Natural killer cell (primary cell): ENCODE measurements at regions of chr2 and their contacts with region 1.

Region 1: GRCh38 chr2:9703085-9703641 is 72.4 kb upstream of the YWHAQ start:
- DNase-seq: peak; percentile 88 to 96
- ATAC-seq: peak; percentile 84 to 92 (median 90)
- H3K4me3 ChIP-seq: no peak overlapping the region
- H3K4me3 Mint-ChIP-seq: peak overlapping the region; percentile 77
- H3K27ac ChIP-seq: peak overlapping the region; percentile 96
- H3K27ac Mint-ChIP-seq: peak overlapping the region; percentile 95 to 97
- H3K4me1 ChIP-seq: peaks cover 47% of the 10 kb centered on the region
- H3K4me1 Mint-ChIP-seq: peaks cover 64 to 80% of the 10 kb centered on the region in 2 donors
- H3K27me3 ChIP-seq: no peaks in the 10 kb centered on the region
- H3K27me3 Mint-ChIP-seq: no peaks in the 10 kb centered on the region
- CTCF ChIP-seq: no peak

Region 2: DNA sequence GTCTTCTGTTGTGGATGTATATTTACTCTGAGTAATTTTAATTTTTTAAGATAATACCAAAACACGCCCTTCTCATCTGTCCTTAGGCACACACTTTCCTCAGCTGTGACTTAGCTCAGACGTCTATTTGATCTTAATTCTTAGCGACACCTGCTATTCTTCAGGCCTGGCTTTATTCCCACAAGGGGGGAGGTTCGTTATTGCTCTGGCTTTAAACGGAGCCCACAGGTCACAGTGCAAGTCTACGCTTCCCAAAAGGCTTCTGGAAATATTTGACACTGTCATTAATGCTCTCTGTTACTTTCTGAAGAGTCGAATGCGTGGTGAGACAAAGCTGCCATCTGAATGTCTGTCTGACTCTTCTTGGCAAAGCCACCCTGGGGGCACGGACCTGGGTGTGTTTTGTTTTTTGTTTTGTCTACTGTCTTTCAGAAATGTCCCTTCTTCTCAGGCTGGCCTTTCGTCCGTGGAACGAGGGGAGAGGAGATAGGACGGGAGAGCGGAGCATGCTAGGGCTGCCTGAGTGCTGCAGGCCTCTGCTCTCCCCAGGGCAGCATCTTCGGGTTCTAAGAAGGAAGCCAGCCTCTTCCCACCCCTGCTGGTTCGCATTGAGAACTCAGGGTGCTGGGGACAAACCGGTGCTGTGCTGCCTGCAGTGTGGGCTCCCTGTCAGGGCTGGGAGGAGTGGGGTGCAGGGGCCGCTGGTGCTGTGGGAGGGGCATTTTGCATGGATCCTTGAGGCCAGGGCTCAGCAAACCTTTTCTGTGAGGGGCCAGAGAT is 434.7 kb before region 1 on chr2:
- intact Hi-C with region 1: no loop called
- DNase-seq: no peak
- ATAC-seq: no peak
- H3K4me3 ChIP-seq: no peak overlapping the region
- H3K4me3 Mint-ChIP-seq: no peak overlapping the region
- H3K27ac ChIP-seq: no peak overlapping the region
- H3K27ac Mint-ChIP-seq: no peak overlapping the region
- H3K4me1 ChIP-seq: no peaks in the 10 kb centered on the region
- H3K4me1 Mint-ChIP-seq: peaks cover 5% of the 10 kb centered on the region in 2 donors
- H3K27me3 ChIP-seq: no peaks in the 10 kb centered on the region
- H3K27me3 Mint-ChIP-seq: peaks cover 8 to 17% of the 10 kb centered on the region in 2 donors
- CTCF ChIP-seq: no peak

Region 3: DNA sequence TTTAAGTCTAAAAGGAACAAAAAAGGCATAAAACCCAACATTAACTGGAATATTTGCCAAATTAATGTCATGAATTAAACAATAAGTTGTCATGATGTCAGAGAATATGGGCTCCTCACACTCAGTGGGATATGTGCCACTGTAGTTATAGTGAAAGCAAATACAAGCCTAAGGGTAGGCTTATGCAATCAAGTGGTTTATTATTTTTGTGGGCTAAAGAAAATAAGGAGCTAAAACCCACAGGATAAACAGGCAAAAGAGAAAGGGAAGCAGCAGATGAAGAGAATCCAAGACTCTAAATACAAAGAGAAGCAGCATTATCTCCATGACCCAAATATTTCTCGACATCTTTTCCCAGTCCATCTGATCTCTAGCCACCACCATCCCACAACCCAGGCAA is 89.9 kb before region 1 on chr2:
- intact Hi-C with region 1: loop called (anchors 1 kb)
- DNase-seq: no peak
- ATAC-seq: peak in 2 of 3 donors; percentile 44 to 52
- H3K4me3 ChIP-seq: no peak overlapping the region
- H3K4me3 Mint-ChIP-seq: no peak overlapping the region
- H3K27ac ChIP-seq: no peak overlapping the region
- H3K27ac Mint-ChIP-seq: peak overlapping the region; percentile 47 to 56
- H3K4me1 ChIP-seq: peaks cover 16% of the 10 kb centered on the region
- H3K4me1 Mint-ChIP-seq: peaks cover 86 to 97% of the 10 kb centered on the region in 2 donors
- H3K27me3 ChIP-seq: no peaks in the 10 kb centered on the region
- H3K27me3 Mint-ChIP-seq: no peaks in the 10 kb centered on the region
- CTCF ChIP-seq: no peak

Region 4: GRCh38 chr2:9681427-9681817 is 21.7 kb before region 1 on chr2:
- intact Hi-C with region 1: loop called (anchors 1 kb)
- DNase-seq: peak; percentile 48 to 70
- ATAC-seq: peak; percentile 83 to 87 (median 85)
- H3K4me3 ChIP-seq: no peak overlapping the region
- H3K4me3 Mint-ChIP-seq: peak overlapping the region; percentile 31
- H3K27ac ChIP-seq: peak overlapping the region; percentile 87
- H3K27ac Mint-ChIP-seq: peak overlapping the region; percentile 96 to 99
- H3K4me1 ChIP-seq: peaks cover 27% of the 10 kb centered on the region
- H3K4me1 Mint-ChIP-seq: peaks cover 21 to 25% of the 10 kb centered on the region in 2 donors
- H3K27me3 ChIP-seq: no peaks in the 10 kb centered on the region
- H3K27me3 Mint-ChIP-seq: no peaks in the 10 kb centered on the region
- CTCF ChIP-seq: no peak

Region 5: DNA sequence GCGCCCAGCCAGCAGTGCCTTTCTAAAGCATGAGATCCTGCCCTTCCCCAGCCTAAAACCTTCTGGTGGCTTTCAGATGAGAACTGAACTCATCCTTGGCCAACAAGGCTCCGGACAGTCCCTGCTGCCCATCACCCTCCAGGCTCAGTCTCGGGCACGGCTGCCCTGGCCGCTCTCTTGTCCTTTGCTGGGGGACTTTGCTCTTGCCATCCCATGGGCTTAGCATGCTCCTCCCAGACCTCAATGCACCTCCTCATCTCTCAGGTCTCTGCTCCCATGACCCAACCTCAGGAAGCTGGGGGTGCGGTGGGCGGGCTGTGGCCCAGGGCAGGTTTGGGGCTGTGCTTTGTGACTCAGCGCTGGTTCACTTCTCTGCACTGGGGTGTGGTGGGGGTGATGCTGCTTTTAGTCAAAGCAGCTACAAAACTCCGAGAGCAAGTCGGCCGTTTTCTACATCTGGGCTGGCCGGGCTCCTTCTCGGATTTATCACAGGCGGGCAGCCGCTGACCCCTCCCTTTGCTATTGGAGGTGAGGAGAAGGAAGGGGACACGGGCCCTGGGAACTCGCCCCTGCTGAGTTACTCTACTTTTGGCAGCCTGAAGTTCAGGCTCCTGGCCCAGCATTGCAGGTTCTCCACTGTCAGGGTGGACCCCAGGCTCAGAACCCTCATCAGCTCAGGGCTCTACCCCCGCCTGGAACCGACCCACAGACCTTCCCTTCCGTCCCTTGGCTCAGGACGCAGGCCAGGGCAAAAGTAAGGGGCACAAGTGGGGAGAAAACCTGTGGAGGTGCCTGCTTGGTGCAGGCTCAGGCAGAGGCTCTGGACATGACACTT is 49.5 kb after region 1 on chr2:
- intact Hi-C with region 1: loop called (anchors 1 kb)
- DNase-seq: peak; percentile 44 to 78
- ATAC-seq: peak; percentile 43 to 68 (median 59)
- H3K4me3 ChIP-seq: no peak overlapping the region
- H3K4me3 Mint-ChIP-seq: peak overlapping the region; percentile 79
- H3K27ac ChIP-seq: peak overlapping the region; percentile 64
- H3K27ac Mint-ChIP-seq: peak overlapping the region; percentile 78 to 93
- H3K4me1 ChIP-seq: peaks cover 57% of the 10 kb centered on the region
- H3K4me1 Mint-ChIP-seq: peaks cover 42 to 68% of the 10 kb centered on the region in 2 donors
- H3K27me3 ChIP-seq: no peaks in the 10 kb centered on the region
- H3K27me3 Mint-ChIP-seq: peaks cover 0 to 33% of the 10 kb centered on the region in 2 donors
- CTCF ChIP-seq: no peak